ENCODE measurements at regions of chr3 and their contacts with region 1.

Region 1: GRCh38 chr3:16884084-16884747 is 539 bp upstream of the PLCL2 start:
- DNase-seq: peak; percentile 95
- H3K4me3 ChIP-seq: peak overlapping the region; percentile 73 to 77
- H3K27ac ChIP-seq: peak overlapping the region in 1 of 2 experiments; percentile 34; a peak in 1 of 4 replicates
- H3K4me1 ChIP-seq: peaks cover 0 to 4% of the 10 kb centered on the region in 2 experiments; a peak in 2 of 4 replicates
- H3K27me3 ChIP-seq: no peaks in the 10 kb centered on the region
- CTCF ChIP-seq: peak; percentile 53
- EP300 ChIP-seq: no peak
- RAD21 ChIP-seq: peak; percentile 51

Region 2: DNA sequence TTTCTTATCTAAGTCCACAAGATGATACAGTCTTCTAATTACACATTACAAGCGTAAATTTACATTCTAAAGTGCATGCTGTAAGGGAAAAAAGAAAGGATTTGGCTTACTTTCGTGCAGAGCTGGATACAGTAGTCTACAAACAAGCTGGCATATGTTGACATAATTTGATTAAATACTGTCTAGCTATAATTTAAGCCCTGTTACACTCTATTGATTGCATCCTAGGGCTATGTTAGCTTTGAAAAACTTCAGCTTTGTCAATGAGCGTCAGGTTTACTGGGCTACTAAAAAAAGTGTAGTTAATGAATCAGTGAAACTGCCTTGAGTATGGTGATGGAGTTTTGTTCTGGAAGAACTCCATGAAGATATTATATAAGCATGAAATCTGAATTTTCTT is 24.0 kb before region 1 on chr3:
- CTCF ChIA-PET with region 1: interaction called, 10 read pairs
- POLR2A ChIA-PET with region 1: no interaction called
- DNase-seq: peak; percentile 24
- H3K4me3 ChIP-seq: no peak overlapping the region
- H3K27ac ChIP-seq: no peak overlapping the region
- H3K4me1 ChIP-seq: no peaks in the 10 kb centered on the region
- H3K27me3 ChIP-seq: no peaks in the 10 kb centered on the region
- CTCF ChIP-seq: no peak
- EP300 ChIP-seq: no peak
- RAD21 ChIP-seq: no peak

Region 3: GRCh38 chr3:16871915-16872842 is 12.0 kb before region 1 on chr3:
- CTCF ChIA-PET with region 1: interaction called, 14 read pairs
- POLR2A ChIA-PET with region 1: no interaction called
- DNase-seq: no peak
- H3K4me3 ChIP-seq: no peak overlapping the region
- H3K27ac ChIP-seq: no peak overlapping the region
- H3K4me1 ChIP-seq: no peaks in the 10 kb centered on the region
- H3K27me3 ChIP-seq: no peaks in the 10 kb centered on the region
- CTCF ChIP-seq: no peak
- EP300 ChIP-seq: no peak
- RAD21 ChIP-seq: no peak

Region 4: DNA sequence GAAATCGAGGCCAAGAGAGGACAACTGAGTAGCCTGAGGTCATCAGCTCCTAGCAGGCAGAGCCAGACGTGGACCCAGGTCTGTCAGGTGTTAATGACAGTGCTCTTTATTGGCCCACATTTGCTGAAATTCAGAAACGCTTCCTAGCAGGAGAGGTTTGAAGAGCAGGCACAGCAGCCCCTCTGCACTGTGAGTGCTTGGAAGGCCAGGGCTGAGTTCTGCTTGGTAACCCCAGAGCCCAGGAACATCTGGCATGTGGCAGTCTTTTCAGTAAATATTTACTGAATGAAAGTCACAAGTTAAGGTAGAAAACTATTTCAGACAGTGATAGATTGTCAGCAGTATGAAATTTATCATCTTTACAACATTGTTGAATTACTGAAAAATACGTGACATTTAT is 102.9 kb after region 1 on chr3:
- CTCF ChIA-PET with region 1: no interaction called
- POLR2A ChIA-PET with region 1: no interaction called
- DNase-seq: no peak
- H3K4me3 ChIP-seq: no peak overlapping the region
- H3K27ac ChIP-seq: no peak overlapping the region
- H3K4me1 ChIP-seq: no peaks in the 10 kb centered on the region
- H3K27me3 ChIP-seq: no peaks in the 10 kb centered on the region
- CTCF ChIP-seq: no peak
- EP300 ChIP-seq: no peak
- RAD21 ChIP-seq: no peak

Region 5: GRCh38 chr3:17032407-17033034 is 148.3 kb after region 1 on chr3:
- CTCF ChIA-PET with region 1: interaction called, 10 read pairs
- POLR2A ChIA-PET with region 1: no interaction called
- DNase-seq: peak; percentile 39
- H3K4me3 ChIP-seq: no peak overlapping the region; a peak in 1 of 4 replicates
- H3K27ac ChIP-seq: no peak overlapping the region
- H3K4me1 ChIP-seq: no peaks in the 10 kb centered on the region
- H3K27me3 ChIP-seq: no peaks in the 10 kb centered on the region
- CTCF ChIP-seq: peak; percentile 68
- EP300 ChIP-seq: no peak
- RAD21 ChIP-seq: peak; percentile 91

Region 6: DNA sequence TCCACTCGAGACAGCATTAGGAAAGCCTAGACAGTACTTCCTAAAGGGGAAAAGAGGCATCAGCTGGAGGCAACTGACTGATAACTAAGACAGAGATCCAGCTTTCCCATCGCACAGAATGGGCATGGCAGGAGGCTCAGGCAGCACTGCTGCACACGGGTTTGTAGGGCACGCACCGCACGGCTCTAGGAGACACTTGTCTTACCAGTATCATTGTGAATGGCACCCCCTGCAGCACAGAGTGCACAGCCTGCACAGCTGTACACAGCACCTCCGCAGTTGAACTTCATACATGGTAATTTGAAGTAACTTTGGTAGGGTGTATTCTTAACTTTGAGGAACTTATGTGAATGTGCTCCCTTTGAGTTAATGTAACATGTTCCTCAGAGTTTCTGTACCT is 282.2 kb after region 1 on chr3:
- CTCF ChIA-PET with region 1: no interaction called
- POLR2A ChIA-PET with region 1: no interaction called
- DNase-seq: no peak
- H3K4me3 ChIP-seq: no peak overlapping the region
- H3K27ac ChIP-seq: no peak overlapping the region
- H3K4me1 ChIP-seq: peaks cover 0 to 3% of the 10 kb centered on the region in 2 experiments; a peak in 1 of 4 replicates
- H3K27me3 ChIP-seq: no peaks in the 10 kb centered on the region
- CTCF ChIP-seq: no peak
- EP300 ChIP-seq: no peak
- RAD21 ChIP-seq: no peak

Measured in SK-N-SH (cell line).